Activated CD4-positive, alpha-beta T cell treated with anti-CD3 and anti-CD28 coated beads for 36 hours (primary cell): ENCODE measurements at regions of chr6 and their contacts with region 1.

Region 1: DNA sequence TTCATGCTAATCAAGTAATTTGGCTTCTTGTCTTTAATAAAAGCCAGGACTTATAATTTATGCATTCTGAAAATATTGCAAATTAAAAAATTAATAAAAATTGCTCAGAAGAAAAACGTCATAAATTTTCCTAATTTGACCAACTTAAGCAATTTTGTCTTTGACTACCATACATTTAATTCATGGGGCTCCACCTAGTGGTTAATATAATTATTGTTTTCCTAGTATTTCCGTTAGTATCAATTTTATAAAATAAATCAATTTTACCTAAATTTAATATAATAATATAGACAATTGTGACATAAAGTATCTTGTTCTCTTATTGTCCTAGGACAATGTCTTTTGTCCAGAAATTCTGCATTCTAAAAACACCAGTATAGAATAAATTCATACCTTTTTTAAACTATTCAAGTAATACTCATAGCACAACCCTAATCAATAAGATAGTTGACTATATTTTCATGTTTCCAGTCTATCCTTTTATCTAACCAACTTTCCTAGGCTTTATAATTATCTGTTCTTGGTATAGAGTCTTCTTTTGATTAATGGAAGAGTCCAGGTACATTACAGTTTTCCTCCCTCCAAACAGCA is 319.9 kb downstream of the TRDN start:
- DNase-seq: no peak
- ATAC-seq: no peak
- H3K4me3 Mint-ChIP-seq: no peak overlapping the region
- H3K27ac Mint-ChIP-seq: no peak overlapping the region
- H3K4me1 Mint-ChIP-seq: no peaks in the 10 kb centered on the region
- H3K27me3 Mint-ChIP-seq: peaks cover 3% of the 10 kb centered on the region

Region 2: GRCh38 chr6:122730775-122731386 is 585.9 kb before region 1 on chr6:
- CTCF ChIA-PET with region 1: interaction called, 3 read pairs
- POLR2A ChIA-PET with region 1: no interaction called
- intact Hi-C with region 1: loop called (anchors 1 to 2 kb)
- DNase-seq: peak; percentile 25
- ATAC-seq: no peak
- H3K4me3 Mint-ChIP-seq: no peak overlapping the region
- H3K27ac Mint-ChIP-seq: no peak overlapping the region
- H3K4me1 Mint-ChIP-seq: no peaks in the 10 kb centered on the region
- H3K27me3 Mint-ChIP-seq: peaks cover 2% of the 10 kb centered on the region

Region 3: DNA sequence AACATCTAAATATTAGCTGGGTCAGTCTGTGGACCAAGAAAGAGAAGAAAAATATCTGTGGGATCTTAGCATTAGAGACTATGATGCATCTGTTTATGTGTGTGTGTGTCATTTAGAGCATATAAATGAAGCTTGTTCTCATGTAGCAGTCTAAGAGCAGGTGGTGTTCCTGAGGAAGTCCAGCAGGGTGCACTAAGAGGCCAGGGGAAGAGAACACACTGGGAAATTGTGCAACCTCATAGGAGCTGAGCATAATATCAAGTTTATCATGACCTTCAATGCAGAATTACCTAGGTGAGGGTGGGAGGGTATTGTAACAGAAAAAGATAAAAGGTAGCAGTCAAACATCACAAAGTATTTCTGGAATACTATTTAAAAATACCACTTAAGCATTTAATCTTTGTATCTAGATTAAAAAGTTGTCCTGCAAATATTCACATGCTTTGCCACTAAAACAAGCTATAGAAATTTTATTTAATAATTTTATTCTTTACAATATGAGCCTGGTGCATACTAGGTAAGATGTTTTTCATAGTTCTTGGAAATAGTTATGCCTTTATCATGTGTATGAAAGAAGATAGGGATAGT is 447.3 kb before region 1 on chr6:
- CTCF ChIA-PET with region 1: interaction called, 5 read pairs
- POLR2A ChIA-PET with region 1: no interaction called
- intact Hi-C with region 1: loop called (anchors 2 kb)
- DNase-seq: peak; percentile 18
- ATAC-seq: no peak
- H3K4me3 Mint-ChIP-seq: no peak overlapping the region
- H3K27ac Mint-ChIP-seq: no peak overlapping the region
- H3K4me1 Mint-ChIP-seq: no peaks in the 10 kb centered on the region
- H3K27me3 Mint-ChIP-seq: no peaks in the 10 kb centered on the region

Region 4: DNA sequence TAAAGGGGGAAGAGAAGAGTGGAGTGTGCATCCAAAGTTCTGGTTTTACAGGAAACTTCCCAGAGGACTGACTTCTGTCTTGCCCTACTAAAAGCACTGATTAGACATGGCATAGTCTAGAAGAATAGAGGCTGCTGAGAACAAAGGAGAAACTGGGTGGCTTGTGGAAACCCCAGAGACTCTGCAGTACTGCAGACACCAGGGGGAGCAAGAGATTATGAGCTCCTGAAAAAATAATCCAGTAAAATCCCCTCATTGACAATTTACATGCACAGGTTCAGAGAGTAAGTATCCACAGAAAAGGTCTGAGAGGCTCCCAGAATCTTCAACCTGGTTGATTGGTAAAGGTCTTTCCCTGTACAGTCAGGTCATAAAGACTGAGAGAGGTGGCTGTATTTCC is 369.5 kb before region 1 on chr6:
- CTCF ChIA-PET with region 1: no interaction called
- POLR2A ChIA-PET with region 1: no interaction called
- intact Hi-C with region 1: loop called in 1 of 2 experiments (anchors 5 kb)
- DNase-seq: no peak
- ATAC-seq: no peak
- H3K4me3 Mint-ChIP-seq: no peak overlapping the region
- H3K27ac Mint-ChIP-seq: no peak overlapping the region
- H3K4me1 Mint-ChIP-seq: no peaks in the 10 kb centered on the region
- H3K27me3 Mint-ChIP-seq: no peaks in the 10 kb centered on the region

Region 5: DNA sequence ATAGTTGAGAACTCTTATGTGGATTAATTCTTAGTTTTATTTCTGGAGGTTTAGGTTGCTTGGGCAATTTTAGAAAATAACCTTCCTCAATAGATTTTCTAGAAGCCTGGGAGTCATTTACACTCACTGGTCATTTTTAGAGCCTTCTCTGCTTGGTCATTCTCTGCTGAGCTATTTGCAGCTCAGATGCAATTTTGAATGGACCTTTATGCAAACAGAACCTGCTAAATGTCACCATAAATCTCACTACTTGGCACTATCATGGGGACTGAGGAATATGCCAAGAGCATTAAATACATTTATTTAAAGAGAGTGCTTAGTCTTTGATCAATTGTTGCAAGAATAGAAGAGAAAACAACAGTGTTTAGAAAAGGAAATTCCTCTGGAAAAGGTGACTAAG is 166.8 kb before region 1 on chr6:
- CTCF ChIA-PET with region 1: no interaction called
- POLR2A ChIA-PET with region 1: no interaction called
- intact Hi-C with region 1: no loop called
- DNase-seq: no peak
- ATAC-seq: no peak
- H3K4me3 Mint-ChIP-seq: no peak overlapping the region
- H3K27ac Mint-ChIP-seq: no peak overlapping the region
- H3K4me1 Mint-ChIP-seq: no peaks in the 10 kb centered on the region
- H3K27me3 Mint-ChIP-seq: no peaks in the 10 kb centered on the region

Region 6: DNA sequence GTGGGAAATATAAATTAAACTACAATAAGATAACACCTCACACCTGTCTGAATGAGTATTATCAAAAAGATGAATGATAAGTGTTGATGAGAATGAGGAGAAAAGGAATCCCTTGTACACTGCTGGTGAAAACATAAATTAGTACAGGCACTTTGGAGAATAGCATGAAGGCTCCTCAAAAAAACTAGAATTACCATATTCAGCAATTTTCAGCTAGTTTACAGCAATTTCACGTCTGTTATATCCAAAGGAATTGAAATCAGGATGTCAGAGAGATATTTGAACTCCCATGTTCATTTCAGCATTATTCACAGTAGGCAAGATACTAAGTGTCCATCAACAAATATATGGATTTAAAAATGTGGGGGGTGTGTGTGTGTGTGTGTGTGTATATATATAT is 28.2 kb before region 1 on chr6:
- CTCF ChIA-PET with region 1: no interaction called
- POLR2A ChIA-PET with region 1: no interaction called
- intact Hi-C with region 1: no loop called
- DNase-seq: no peak
- ATAC-seq: no peak
- H3K4me3 Mint-ChIP-seq: no peak overlapping the region
- H3K27ac Mint-ChIP-seq: no peak overlapping the region
- H3K4me1 Mint-ChIP-seq: no peaks in the 10 kb centered on the region
- H3K27me3 Mint-ChIP-seq: no peaks in the 10 kb centered on the region